ENCODE measurements at regions of chr3 and their contacts with region 1.

Region 1: GRCh38 chr3:43769471-43770425 is 79.0 kb downstream of the ABHD5 start:
- DNase-seq: peak; percentile 82 to 96 (median 92)
- H3K4me3 ChIP-seq: peak overlapping the region; percentile 8 to 69 (median 45)
- H3K27ac ChIP-seq: peak overlapping the region in 37 of 59 donors; percentile 3 to 75 (median 51)
- H3K27me3 ChIP-seq: no peaks in the 10 kb centered on the region
- CTCF ChIP-seq: peak; percentile 86 to 98 (median 95)

Region 2: GRCh38 chr3:43540624-43541023 is 229.1 kb before region 1 on chr3:
- intact Hi-C with region 1: loop called (anchors 10 kb)
- DNase-seq: no peak
- H3K4me3 ChIP-seq: no peak overlapping the region
- H3K27ac ChIP-seq: no peak overlapping the region
- H3K27me3 ChIP-seq: no peaks in the 10 kb centered on the region
- CTCF ChIP-seq: no peak

Region 3: GRCh38 chr3:43621656-43622432 is 147.9 kb before region 1 on chr3 and contains the start of gene ANO10:
- intact Hi-C with region 1: loop called in 1 of 2 experiments (anchors 10 kb)
- DNase-seq: peak; percentile 96 to 99 (median 97)
- H3K4me3 ChIP-seq: peak within 1 kb of the TSS; percentile 73 to 96 (median 90)
- H3K27ac ChIP-seq: peak within 1 kb of the TSS in 58 of 59 donors; percentile 41 to 95 (median 82)
- H3K27me3 ChIP-seq: no peaks in the 10 kb centered on the region
- CTCF ChIP-seq: peak in 15 of 56 donors; percentile 0 to 57 (median 27)
- total RNA-seq, gene ANO10: 24.1 to 52.4 (median 34.0) TPM

Region 4: GRCh38 chr3:43659250-43659880 is 110.4 kb before region 1 on chr3:
- intact Hi-C with region 1: no loop called
- DNase-seq: no peak
- H3K4me3 ChIP-seq: no peak overlapping the region
- H3K27ac ChIP-seq: no peak overlapping the region
- H3K27me3 ChIP-seq: no peaks in the 10 kb centered on the region
- CTCF ChIP-seq: no peak

Region 5: GRCh38 chr3:43690400-43691119 is 79.2 kb before region 1 on chr3 and contains the start of gene ABHD5:
- intact Hi-C with region 1: loop called in 1 of 2 experiments (anchors 2 kb)
- DNase-seq: peak; percentile 71 to 91 (median 84)
- H3K4me3 ChIP-seq: peak within 1 kb of the TSS; percentile 54 to 99 (median 89)
- H3K27ac ChIP-seq: peak within 1 kb of the TSS; percentile 39 to 97 (median 89)
- H3K27me3 ChIP-seq: no peaks in the 10 kb centered on the region
- CTCF ChIP-seq: peak in 42 of 56 donors; percentile 3 to 55 (median 36)
- total RNA-seq, gene ABHD5: 11.8 to 30.9 (median 18.3) TPM

Region 6: GRCh38 chr3:43919029-43919428 is 149.3 kb after region 1 on chr3:
- intact Hi-C with region 1: no loop called
- DNase-seq: no peak
- H3K4me3 ChIP-seq: no peak overlapping the region
- H3K27ac ChIP-seq: no peak overlapping the region
- H3K27me3 ChIP-seq: peaks cover 0 to 24% (median 4%) of the 10 kb centered on the region in 45 donors
- CTCF ChIP-seq: no peak

Region 7: GRCh38 chr3:44208086-44208485 is 438.3 kb after region 1 on chr3:
- intact Hi-C with region 1: loop called in 1 of 2 experiments (anchors 10 kb)
- DNase-seq: no peak
- H3K4me3 ChIP-seq: no peak overlapping the region
- H3K27ac ChIP-seq: no peak overlapping the region
- H3K27me3 ChIP-seq: peaks cover 0 to 12% (median 0%) of the 10 kb centered on the region in 45 donors
- CTCF ChIP-seq: no peak